MCF 10A (cell line): ENCODE measurements at regions of chr1 and their contacts with region 1.

Region 1: DNA sequence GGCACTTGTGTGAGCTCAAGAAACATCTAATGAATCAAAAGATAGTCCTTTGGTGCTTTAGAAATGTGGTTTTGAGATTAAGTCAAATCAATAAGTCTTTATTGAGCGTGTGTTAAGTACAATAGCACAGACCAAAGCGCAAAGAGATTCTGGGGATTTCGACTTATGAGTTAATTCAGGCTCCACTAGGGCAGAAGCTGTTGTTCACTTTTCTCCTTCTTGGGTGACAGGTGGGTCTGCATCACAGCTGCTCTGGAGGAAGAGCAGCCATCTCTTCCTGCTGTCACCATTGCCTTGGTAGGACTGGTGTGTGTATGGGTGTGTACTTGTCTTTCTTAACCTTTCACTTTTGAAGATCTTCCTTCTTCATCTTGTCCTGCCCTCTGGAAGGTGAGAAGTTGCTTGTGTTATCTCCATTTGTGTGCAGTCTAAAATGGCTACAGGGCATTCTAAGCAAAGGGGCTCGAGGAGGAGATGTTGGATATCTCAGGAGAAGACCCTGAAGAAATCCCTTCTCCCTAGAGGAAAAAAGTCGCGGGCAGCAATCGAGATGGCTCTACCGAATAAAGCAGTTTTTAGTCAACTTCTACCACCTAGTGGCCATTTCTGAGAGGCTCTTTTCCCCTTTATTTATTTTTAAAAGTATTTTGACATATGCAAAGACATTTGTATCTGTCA is 22.9 kb upstream of the DISC1 start:
- DNase-seq: peak; percentile 84
- H3K4me3 Mint-ChIP-seq: peak overlapping the region; percentile 84
- H3K27ac Mint-ChIP-seq: peak overlapping the region; percentile 66
- H3K4me1 Mint-ChIP-seq: peaks cover 12% of the 10 kb centered on the region
- H3K27me3 Mint-ChIP-seq: peaks cover 26% of the 10 kb centered on the region
- CTCF ChIP-seq: peak; percentile 91

Region 2: DNA sequence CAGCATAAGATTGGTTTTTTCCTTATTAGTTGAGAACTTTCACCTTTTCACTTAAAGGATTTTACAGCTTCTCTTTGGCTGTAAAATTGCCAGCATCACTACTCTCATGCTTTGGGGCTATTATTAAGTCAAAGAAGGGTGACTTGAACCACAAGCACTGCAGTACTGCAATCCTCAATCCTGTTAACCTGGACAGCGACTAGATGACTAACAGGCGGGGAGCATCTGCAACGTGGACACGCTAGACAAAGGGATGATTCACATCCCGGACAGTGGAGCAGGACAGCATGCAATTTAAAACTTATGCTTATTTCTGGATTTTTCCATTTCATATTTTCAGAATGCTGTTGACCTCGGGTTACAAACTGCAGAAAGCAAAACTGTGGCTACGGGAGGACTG is 616.8 kb before region 1 on chr1:
- CTCF ChIA-PET with region 1: interaction called, 3 read pairs
- POLR2A ChIA-PET with region 1: no interaction called
- intact Hi-C with region 1: loop called (anchors 5 kb)
- DNase-seq: peak; percentile 90
- H3K4me3 Mint-ChIP-seq: no peak overlapping the region
- H3K27ac Mint-ChIP-seq: no peak overlapping the region
- H3K4me1 Mint-ChIP-seq: peaks cover 11% of the 10 kb centered on the region
- H3K27me3 Mint-ChIP-seq: no peaks in the 10 kb centered on the region
- CTCF ChIP-seq: no peak

Region 3: GRCh38 chr1:231584124-231584523 is 19.6 kb before region 1 on chr1:
- CTCF ChIA-PET with region 1: interaction called, 87 read pairs
- POLR2A ChIA-PET with region 1: interaction called, 3 read pairs
- intact Hi-C with region 1: no loop called
- DNase-seq: peak; percentile 73
- H3K4me3 Mint-ChIP-seq: no peak overlapping the region
- H3K27ac Mint-ChIP-seq: no peak overlapping the region
- H3K4me1 Mint-ChIP-seq: peaks cover 6% of the 10 kb centered on the region
- H3K27me3 Mint-ChIP-seq: no peaks in the 10 kb centered on the region
- CTCF ChIP-seq: peak; percentile 54

Region 4: GRCh38 chr1:231618609-231619256 is 15.0 kb after region 1 on chr1:
- CTCF ChIA-PET with region 1: interaction called, 6 read pairs
- POLR2A ChIA-PET with region 1: interaction called, 19 read pairs
- intact Hi-C with region 1: no loop called
- DNase-seq: no peak
- H3K4me3 Mint-ChIP-seq: no peak overlapping the region
- H3K27ac Mint-ChIP-seq: no peak overlapping the region
- H3K4me1 Mint-ChIP-seq: no peaks in the 10 kb centered on the region
- H3K27me3 Mint-ChIP-seq: peaks cover 91% of the 10 kb centered on the region
- CTCF ChIP-seq: no peak

Region 5: GRCh38 chr1:231636157-231636556 is 32.4 kb after region 1 on chr1:
- CTCF ChIA-PET with region 1: no interaction called
- POLR2A ChIA-PET with region 1: no interaction called
- intact Hi-C with region 1: no loop called
- DNase-seq: peak; percentile 41
- H3K4me3 Mint-ChIP-seq: no peak overlapping the region
- H3K27ac Mint-ChIP-seq: no peak overlapping the region
- H3K4me1 Mint-ChIP-seq: peaks cover 11% of the 10 kb centered on the region
- H3K27me3 Mint-ChIP-seq: no peaks in the 10 kb centered on the region
- CTCF ChIP-seq: no peak

Region 6: GRCh38 chr1:231653632-231654031 is 49.9 kb after region 1 on chr1:
- CTCF ChIA-PET with region 1: no interaction called
- POLR2A ChIA-PET with region 1: no interaction called
- intact Hi-C with region 1: no loop called
- DNase-seq: no peak
- H3K4me3 Mint-ChIP-seq: no peak overlapping the region
- H3K27ac Mint-ChIP-seq: no peak overlapping the region
- H3K4me1 Mint-ChIP-seq: peaks cover 3% of the 10 kb centered on the region
- H3K27me3 Mint-ChIP-seq: peaks cover 27% of the 10 kb centered on the region
- CTCF ChIP-seq: no peak

Region 7: GRCh38 chr1:231931846-231932454 is 328.2 kb after region 1 on chr1:
- CTCF ChIA-PET with region 1: no interaction called
- POLR2A ChIA-PET with region 1: no interaction called
- intact Hi-C with region 1: no loop called
- DNase-seq: peak; percentile 58
- H3K4me3 Mint-ChIP-seq: no peak overlapping the region
- H3K27ac Mint-ChIP-seq: no peak overlapping the region
- H3K4me1 Mint-ChIP-seq: peaks cover 36% of the 10 kb centered on the region
- H3K27me3 Mint-ChIP-seq: no peaks in the 10 kb centered on the region
- CTCF ChIP-seq: peak; percentile 90

Region 8: DNA sequence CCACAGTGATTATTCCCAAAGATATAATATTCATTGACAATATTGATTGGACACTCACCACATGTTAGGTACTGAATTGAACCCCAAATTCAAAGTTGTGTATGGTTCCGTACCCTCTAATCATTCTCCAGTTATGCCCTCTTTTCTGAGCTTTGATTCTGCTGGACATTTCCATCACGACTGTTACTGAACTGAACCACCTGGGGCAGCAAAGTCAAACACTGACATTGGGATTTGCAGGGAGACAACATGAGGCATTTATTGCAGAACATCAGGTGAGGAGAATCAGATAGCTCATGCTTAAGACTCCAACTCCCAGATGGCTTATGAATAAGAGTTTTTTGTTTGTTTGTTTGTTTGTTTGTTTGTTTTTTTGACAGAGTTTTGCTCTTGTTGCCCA is 443.7 kb after region 1 on chr1:
- CTCF ChIA-PET with region 1: no interaction called
- POLR2A ChIA-PET with region 1: no interaction called
- intact Hi-C with region 1: no loop called
- DNase-seq: peak; percentile 53
- H3K4me3 Mint-ChIP-seq: no peak overlapping the region
- H3K27ac Mint-ChIP-seq: no peak overlapping the region
- H3K4me1 Mint-ChIP-seq: peaks cover 6% of the 10 kb centered on the region
- H3K27me3 Mint-ChIP-seq: no peaks in the 10 kb centered on the region
- CTCF ChIP-seq: peak; percentile 22